Esophagus squamous epithelium (tissue), 5 donors: ENCODE measurements at regions of chr6 and their contacts with region 1.

Region 1: GRCh38 chr6:105474234-105474633 is 71.4 kb upstream of the PREP start:
- DNase-seq: no peak
- H3K4me3 ChIP-seq: no peak overlapping the region
- H3K27ac ChIP-seq: no peak overlapping the region
- H3K4me1 ChIP-seq: peaks cover 0 to 5% (median 0%) of the 10 kb centered on the region in 3 donors
- H3K27me3 ChIP-seq: no peaks in the 10 kb centered on the region
- CTCF ChIP-seq: no peak
- POLR2A ChIP-seq: no peak

Region 2: GRCh38 chr6:105235155-105235554 is 239.1 kb before region 1 on chr6:
- intact Hi-C with region 1: no loop called
- DNase-seq: no peak
- H3K4me3 ChIP-seq: no peak overlapping the region
- H3K27ac ChIP-seq: no peak overlapping the region
- H3K4me1 ChIP-seq: no peaks in the 10 kb centered on the region
- H3K27me3 ChIP-seq: peaks cover 0 to 11% (median 0%) of the 10 kb centered on the region in 4 donors
- CTCF ChIP-seq: no peak
- POLR2A ChIP-seq: no peak

Region 3: DNA sequence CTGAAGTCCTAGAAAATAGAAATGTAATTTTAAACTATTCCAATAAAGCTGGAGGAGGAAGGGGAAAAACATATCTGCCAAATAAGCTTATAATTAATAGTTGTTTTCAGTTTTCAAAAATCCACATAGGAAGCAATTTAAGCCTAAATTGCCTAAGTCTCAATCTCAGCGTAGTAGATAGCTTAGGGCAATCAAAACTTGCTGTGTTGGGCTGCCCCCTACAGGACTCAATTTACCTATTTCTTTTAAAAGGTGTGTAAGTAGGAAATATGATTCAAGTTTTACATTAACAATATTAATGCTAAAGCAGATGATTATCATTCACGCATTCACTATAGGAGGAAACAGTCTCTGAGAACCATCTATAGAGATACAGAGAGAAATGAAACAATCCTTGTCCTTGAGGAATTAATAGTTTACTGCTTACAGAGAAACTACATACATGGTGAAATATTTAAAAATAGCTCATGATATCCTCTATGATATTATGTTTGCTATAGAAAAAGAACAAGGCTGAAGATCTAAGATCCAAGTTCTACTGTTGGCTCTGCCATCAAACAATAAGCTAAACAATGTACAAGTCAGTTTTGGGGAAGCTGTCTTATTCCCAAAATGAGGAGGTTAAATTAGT is 749.2 kb after region 1 on chr6:
- intact Hi-C with region 1: loop called (anchors 10 kb)
- DNase-seq: no peak
- H3K4me3 ChIP-seq: no peak overlapping the region
- H3K27ac ChIP-seq: no peak overlapping the region
- H3K4me1 ChIP-seq: no peaks in the 10 kb centered on the region
- H3K27me3 ChIP-seq: no peaks in the 10 kb centered on the region
- CTCF ChIP-seq: peak; percentile 48 to 82 (median 62)
- POLR2A ChIP-seq: no peak